ENCODE measurements at regions of chr11 and their contacts with region 1.

Region 1: DNA sequence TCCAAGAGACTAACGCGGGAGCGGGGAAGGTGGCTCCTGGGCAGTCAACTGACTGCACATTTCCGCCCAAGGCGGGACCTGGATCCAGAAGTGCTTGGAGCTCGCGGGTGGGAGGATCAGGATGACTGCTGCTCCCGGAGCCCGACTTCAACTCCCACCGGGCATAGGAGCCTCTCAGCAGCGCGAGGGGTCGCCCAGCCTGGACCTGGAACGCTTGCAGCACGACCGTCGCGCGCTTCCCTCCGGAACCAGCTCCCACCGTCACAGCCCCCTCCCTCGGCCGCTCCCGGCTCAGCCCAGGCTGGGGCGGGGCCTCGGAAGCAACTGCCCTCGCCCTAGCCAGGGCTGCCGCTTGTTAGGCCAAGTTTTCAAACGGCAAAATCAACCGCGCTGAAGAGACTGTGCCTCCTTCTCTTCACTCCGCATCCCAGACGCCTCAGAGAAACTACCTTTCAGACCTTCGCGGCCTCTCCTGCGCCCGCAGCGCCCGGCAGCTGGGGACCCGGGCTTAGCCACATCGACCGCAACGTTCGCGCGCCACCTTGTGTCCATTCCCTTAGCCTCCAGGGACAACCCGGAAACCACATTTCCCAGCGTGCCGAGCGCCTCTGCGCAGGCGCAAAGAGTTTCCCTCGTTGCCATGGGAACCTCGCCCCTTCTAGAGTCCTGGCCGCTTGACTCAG is 14.0 kb downstream of the SSH3 start:
- DNase-seq: peak; percentile 99
- ATAC-seq: peak; percentile 83
- H3K4me3 Mint-ChIP-seq: peak overlapping the region; percentile 91
- H3K27ac Mint-ChIP-seq: peak overlapping the region; percentile 96
- H3K4me1 Mint-ChIP-seq: peaks cover 5% of the 10 kb centered on the region
- H3K27me3 Mint-ChIP-seq: peaks cover 41% of the 10 kb centered on the region
- CTCF ChIP-seq: peak; percentile 58

Region 2: GRCh38 chr11:66958232-66958955 is 359.0 kb before region 1 on chr11 and contains the start of gene PC:
- CTCF ChIA-PET with region 1: no interaction called
- POLR2A ChIA-PET with region 1: no interaction called
- DNase-seq: peak; percentile 100
- ATAC-seq: peak; percentile 96
- H3K4me3 Mint-ChIP-seq: peak within 1 kb of the TSS; percentile 87
- H3K27ac Mint-ChIP-seq: peak within 1 kb of the TSS; percentile 99
- H3K4me1 Mint-ChIP-seq: peaks cover 26% of the 10 kb centered on the region
- H3K27me3 Mint-ChIP-seq: peaks cover 17% of the 10 kb centered on the region
- CTCF ChIP-seq: no peak
- total RNA-seq, gene PC: 22.1 to 27.2 TPM (median 25.6 TPM) in 3 replicates

Region 3: DNA sequence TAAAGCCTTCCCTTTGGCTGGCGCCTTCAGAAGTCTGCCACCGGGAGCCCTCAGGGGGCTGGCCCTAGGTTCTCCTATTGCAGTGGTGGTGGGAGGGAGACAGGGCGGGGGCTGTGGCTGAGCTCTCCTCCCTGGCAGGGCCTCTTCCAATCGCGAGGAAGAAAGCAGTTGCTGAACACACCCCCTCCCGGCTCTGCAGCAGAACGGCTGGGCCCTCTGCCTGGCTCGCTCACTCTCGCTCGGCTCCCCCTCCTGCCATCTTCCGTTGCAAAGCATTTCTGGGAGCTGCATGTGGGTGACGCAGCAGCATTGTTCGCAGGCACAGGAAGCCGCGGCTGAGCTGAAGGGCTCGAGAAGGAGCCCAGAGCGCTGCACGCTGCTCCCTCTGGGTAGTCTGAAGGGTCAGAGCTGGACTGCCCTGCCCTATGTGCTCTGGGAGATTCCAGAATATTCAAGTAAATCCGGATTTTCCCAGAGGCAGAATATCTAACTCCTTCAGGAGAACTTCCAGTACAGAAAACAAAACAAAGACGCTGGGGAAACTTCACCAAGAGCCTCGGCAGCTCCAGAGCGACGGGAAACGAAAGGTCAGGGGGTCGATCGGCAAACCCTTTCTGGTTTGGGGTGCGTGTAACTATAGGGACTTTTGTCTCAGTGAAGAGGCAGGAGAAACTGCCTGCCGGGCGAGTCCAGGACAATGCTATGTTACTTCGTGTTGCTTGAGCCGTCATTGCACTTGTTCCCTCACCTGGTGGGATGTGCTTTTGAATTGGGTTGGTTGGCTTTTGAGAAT is 77.4 kb before region 1 on chr11:
- CTCF ChIA-PET with region 1: interaction called, 29 read pairs
- POLR2A ChIA-PET with region 1: interaction called, 10 read pairs
- DNase-seq: peak; percentile 98
- ATAC-seq: peak; percentile 98
- H3K4me3 Mint-ChIP-seq: peak overlapping the region; percentile 96
- H3K27ac Mint-ChIP-seq: peak overlapping the region; percentile 98
- H3K4me1 Mint-ChIP-seq: peaks cover 35% of the 10 kb centered on the region
- H3K27me3 Mint-ChIP-seq: no peaks in the 10 kb centered on the region
- CTCF ChIP-seq: no peak

Region 4: GRCh38 chr11:67277231-67277961 is 40.0 kb before region 1 on chr11:
- CTCF ChIA-PET with region 1: interaction called, 24 read pairs
- POLR2A ChIA-PET with region 1: no interaction called
- DNase-seq: peak; percentile 83
- ATAC-seq: peak; percentile 84
- H3K4me3 Mint-ChIP-seq: peak overlapping the region; percentile 30; the same call in 1 of the 2 replicates
- H3K27ac Mint-ChIP-seq: peak overlapping the region; percentile 95
- H3K4me1 Mint-ChIP-seq: peaks cover 26% of the 10 kb centered on the region
- H3K27me3 Mint-ChIP-seq: no peaks in the 10 kb centered on the region
- CTCF ChIP-seq: no peak

Region 5: DNA sequence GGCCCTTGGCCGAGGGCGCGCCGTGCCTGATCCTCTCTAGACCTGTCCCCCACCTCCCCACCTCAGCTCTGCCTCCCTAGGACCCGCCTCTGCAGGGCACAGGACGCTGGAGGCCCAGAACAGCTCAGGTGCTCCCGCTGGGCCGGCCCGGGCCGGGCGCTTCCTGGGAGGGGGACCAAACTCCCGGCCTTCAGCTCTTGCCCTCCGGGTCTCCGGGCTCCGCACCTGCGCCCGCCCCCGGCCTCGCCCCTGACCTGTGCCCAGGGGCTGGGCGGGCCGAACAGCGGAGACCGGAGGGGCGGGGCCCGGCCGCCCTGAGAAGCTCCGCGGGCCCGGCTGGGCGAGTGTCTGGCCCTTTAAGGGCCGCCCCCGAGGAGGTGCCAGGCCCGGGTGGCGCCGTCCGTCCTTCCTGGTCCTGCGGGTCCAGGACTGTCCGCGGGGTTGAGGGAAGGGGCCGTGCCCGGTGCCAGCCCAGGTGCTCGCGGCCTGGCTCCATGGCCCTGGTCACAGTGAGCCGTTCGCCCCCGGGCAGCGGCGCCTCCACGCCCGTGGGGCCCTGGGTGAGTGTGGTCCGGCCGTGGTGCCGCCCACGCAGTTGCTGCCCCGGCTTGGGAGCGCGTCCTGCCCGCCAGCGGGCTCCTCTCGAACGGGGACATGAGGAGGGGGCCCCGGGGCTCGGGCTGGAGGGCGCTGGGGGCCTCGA is 14.1 kb before region 1 on chr11 and contains the start of gene SSH3:
- CTCF ChIA-PET with region 1: interaction called, 103 read pairs
- POLR2A ChIA-PET with region 1: interaction called, 9 read pairs
- DNase-seq: peak; percentile 78
- ATAC-seq: peak; percentile 82
- H3K4me3 Mint-ChIP-seq: peak within 1 kb of the TSS; percentile 74
- H3K27ac Mint-ChIP-seq: peak within 1 kb of the TSS; percentile 57
- H3K4me1 Mint-ChIP-seq: peaks cover 11% of the 10 kb centered on the region
- H3K27me3 Mint-ChIP-seq: peaks cover 4% of the 10 kb centered on the region; the same call in 1 of the 2 replicates
- CTCF ChIP-seq: no peak
- total RNA-seq, gene SSH3: 34.8 to 43.4 TPM (median 42.3 TPM) in 3 replicates

Region 6: DNA sequence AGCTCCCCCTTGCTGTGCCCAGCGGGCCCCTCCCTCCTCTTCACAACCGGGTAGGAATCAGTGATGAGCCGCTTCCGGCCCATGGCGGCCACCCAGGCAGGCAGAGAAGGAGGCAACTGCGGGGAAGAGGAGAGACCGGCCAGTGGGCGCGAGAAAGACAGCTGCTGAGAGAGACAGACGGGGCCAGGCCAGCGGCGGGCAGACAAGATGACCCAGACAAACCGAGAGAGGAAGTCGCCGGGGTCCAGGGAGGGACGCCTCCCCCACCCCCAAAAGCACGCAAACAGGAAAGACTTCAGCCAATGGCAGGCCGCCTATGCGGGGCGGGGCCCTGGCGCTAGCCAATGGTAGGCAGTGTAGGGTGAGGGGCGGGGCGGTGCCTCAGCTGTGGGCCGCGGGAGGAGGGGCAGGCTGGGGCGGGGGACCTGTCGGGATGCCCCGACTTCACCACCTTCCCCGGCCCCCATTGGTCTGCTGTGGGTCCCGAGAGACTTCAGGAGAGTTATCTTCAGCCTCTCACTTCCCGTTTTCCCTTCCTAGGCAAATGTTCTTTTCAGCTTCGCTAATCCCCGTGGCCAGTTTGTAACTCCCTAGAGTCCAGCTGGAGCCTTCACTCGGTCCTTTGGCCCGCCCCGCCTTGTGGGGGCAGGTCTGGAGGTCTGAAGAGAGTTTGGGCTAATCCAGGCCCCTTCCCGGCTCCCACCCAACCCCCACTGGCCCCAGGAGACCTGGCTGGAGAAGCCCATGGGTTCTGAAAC is 36.1 kb after region 1 on chr11 and contains the start of gene POLD4:
- CTCF ChIA-PET with region 1: interaction called, 25 read pairs
- POLR2A ChIA-PET with region 1: interaction called, 3 read pairs
- DNase-seq: peak; percentile 99
- ATAC-seq: peak; percentile 88
- H3K4me3 Mint-ChIP-seq: peak within 1 kb of the TSS; percentile 91
- H3K27ac Mint-ChIP-seq: peak within 1 kb of the TSS; percentile 90
- H3K4me1 Mint-ChIP-seq: peaks cover 34% of the 10 kb centered on the region
- H3K27me3 Mint-ChIP-seq: peaks cover 10% of the 10 kb centered on the region
- CTCF ChIP-seq: no peak
- total RNA-seq, gene POLD4: 30.3 to 38.3 TPM (median 37.7 TPM) in 3 replicates

Region 7: DNA sequence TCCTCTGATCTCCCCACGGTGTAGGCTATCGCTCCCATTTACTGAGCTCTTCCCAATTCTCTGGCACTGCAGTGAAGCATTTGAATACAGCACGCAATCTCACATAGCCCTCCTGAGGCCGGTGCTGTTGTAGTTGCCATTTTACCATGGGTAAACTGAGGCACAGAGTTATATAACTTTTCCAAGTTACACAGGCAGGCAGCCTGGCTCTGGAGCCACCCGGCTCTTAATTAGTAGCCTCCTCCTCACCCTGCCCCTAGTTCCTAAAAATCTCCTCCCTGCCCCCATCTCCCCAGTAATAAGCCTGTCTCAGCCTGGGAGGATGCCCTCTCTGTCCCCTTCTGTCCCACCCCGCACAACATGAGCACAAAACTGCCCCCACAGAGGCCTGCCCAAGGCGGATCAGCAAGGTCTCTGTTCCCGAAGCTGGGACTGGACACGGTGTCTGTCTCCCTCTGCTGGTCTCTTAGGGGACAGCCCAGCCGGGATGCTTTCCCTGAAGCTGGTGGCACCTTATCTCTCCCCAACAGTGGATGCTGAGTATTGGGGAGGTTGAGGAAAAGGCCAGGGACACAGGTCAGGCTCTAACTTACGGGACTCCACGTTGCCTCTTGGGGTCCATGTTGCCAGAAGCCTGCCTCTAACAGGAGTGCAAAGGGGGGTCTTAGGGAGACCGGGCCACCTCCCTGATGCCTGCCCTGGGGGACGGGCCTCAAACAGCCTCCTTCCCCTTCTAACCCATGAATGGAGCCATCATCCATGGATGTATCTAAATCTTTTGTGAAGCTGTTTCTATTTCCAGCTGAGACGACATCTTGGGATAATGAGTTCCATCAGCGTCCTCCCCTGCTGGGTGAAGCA is 65.2 kb after region 1 on chr11:
- CTCF ChIA-PET with region 1: interaction called, 29 read pairs
- POLR2A ChIA-PET with region 1: no interaction called
- DNase-seq: peak; percentile 90
- ATAC-seq: peak; percentile 85
- H3K4me3 Mint-ChIP-seq: no peak overlapping the region
- H3K27ac Mint-ChIP-seq: no peak overlapping the region; the same call in 1 of the 2 replicates
- H3K4me1 Mint-ChIP-seq: peaks cover 17% of the 10 kb centered on the region
- H3K27me3 Mint-ChIP-seq: peaks cover 52% of the 10 kb centered on the region
- CTCF ChIP-seq: peak; percentile 90

Region 8: DNA sequence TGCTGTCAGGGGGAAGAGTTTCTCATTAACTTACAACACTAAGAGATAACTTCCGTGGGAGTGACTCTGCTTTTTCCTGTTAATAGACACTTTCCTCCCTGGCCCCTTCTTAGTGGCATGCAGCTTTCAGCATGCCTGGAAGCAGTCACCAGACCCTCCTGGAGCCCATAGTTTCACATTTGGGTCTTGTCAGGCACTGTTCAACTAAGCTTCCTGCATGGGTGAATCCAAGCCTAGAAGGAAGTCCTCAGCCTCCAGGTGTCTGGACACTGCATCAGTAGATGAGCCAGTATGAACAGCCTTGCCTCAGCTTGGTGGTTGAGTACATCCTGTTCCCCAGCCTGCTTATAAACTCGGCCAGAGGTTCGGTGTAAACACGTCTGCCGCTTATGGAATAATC is 1211.3 kb after region 1 on chr11:
- CTCF ChIA-PET with region 1: no interaction called
- POLR2A ChIA-PET with region 1: no interaction called
- DNase-seq: no peak
- ATAC-seq: no peak
- H3K4me3 Mint-ChIP-seq: no peak overlapping the region
- H3K27ac Mint-ChIP-seq: 0 out of 2 replicates have a peak overlapping the region, but pooled peaks have one; percentile 48
- H3K4me1 Mint-ChIP-seq: peaks cover 42% of the 10 kb centered on the region
- H3K27me3 Mint-ChIP-seq: no peaks in the 10 kb centered on the region
- CTCF ChIP-seq: no peak